GM12878 (cell line): ENCODE measurements at regions of chr6 and their contacts with region 1.

Region 1: DNA sequence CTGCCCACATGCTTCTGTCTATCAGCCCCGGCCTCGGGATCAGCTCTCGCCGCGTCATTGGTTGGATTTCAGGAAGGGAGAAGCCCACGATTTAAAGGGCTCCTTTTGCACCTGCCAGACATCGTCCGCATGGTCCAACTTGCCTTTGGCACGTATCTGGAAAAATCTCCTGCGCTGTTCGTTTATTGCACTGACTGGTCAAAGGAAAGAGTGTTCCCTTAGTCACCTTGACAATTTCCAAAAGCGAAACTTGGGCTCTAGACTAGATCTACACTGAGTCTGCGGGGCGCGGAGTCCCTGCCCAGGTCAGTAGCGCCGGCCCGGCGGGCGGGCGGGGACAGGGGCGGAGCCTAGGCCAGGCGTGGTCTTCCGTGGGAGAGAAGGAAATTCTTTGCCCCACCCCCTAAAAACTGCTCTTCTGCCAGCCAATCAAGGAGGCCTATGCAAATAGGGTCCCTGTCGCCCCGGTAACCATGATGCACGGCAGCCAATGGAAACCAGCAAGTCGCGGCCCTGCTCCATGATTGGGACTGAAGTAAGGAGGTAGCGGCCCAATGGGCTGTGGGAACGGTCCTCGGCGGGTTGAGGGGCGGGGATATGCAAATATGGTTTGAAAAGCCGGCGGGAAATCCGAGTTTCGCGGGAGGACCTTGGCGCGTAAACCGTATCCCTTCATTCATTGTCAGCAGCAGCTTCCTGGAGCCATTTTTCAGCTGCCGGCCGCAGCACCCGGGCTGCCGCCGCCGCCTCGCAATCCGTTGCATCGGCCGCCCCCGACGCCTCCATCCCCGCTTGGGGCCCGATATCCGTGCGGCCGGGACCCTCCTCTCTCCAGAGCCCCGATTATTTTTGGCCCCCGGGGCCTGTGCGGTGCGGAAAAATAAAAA is at the start of gene E2F3:
- DNase-seq: peak; percentile 98
- ATAC-seq: peak; percentile 83
- H3K4me3 ChIP-seq: peak within 1 kb of the TSS; percentile 82
- H3K27ac ChIP-seq: peak within 1 kb of the TSS; percentile 77
- H3K4me1 ChIP-seq: no peaks in the 10 kb centered on the region; the same call in 1 of the 2 replicates
- H3K27me3 ChIP-seq: no peaks in the 10 kb centered on the region
- CTCF ChIP-seq: no peak
- EP300 ChIP-seq: no peak
- POLR2A ChIP-seq: peak; percentile 87
- RAD21 ChIP-seq: no peak
- polyA plus RNA-seq, gene E2F3: 5.3 to 6.6 TPM

Region 2: DNA sequence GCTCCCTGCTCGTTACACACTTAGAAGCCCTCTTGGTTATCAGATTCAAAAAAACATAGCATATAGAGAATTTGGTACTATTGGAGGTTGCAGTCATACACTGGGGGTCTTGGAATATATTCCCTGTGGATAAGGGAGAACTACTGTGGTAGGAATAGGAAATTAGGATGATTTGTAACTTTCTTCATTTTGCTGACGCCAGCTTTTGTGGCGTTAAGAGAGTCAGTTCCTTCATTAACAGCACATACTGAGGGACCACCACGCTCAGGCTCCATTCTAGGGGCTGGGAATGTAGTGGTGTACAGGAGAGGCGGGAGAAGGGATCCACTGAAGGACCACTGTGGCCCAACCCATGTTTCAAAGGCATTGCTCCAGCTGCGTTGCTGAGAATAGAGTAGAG is 329.4 kb before region 1 on chr6:
- CTCF ChIA-PET with region 1: no interaction called
- POLR2A ChIA-PET with region 1: no interaction called
- RAD21 ChIA-PET with region 1: no interaction called
- SMC1A ChIA-PET with region 1: no interaction called
- in situ Hi-C with region 1: no loop called
- intact Hi-C with region 1: no loop called
- DNase-seq: no peak
- ATAC-seq: no peak
- H3K4me3 ChIP-seq: no peak overlapping the region
- H3K27ac ChIP-seq: no peak overlapping the region
- H3K4me1 ChIP-seq: no peaks in the 10 kb centered on the region
- H3K27me3 ChIP-seq: no peaks in the 10 kb centered on the region
- CTCF ChIP-seq: no peak
- EP300 ChIP-seq: no peak
- POLR2A ChIP-seq: no peak
- RAD21 ChIP-seq: no peak

Region 3: GRCh38 chr6:20117474-20117873 is 284.0 kb before region 1 on chr6:
- CTCF ChIA-PET with region 1: no interaction called
- POLR2A ChIA-PET with region 1: no interaction called
- RAD21 ChIA-PET with region 1: no interaction called
- SMC1A ChIA-PET with region 1: no interaction called
- in situ Hi-C with region 1: no loop called
- intact Hi-C with region 1: no loop called
- DNase-seq: no peak
- ATAC-seq: peak; percentile 74
- H3K4me3 ChIP-seq: no peak overlapping the region
- H3K27ac ChIP-seq: no peak overlapping the region
- H3K4me1 ChIP-seq: no peaks in the 10 kb centered on the region; the same call in 1 of the 2 replicates
- H3K27me3 ChIP-seq: no peaks in the 10 kb centered on the region
- CTCF ChIP-seq: no peak
- EP300 ChIP-seq: no peak
- POLR2A ChIP-seq: no peak
- RAD21 ChIP-seq: no peak

Region 4: DNA sequence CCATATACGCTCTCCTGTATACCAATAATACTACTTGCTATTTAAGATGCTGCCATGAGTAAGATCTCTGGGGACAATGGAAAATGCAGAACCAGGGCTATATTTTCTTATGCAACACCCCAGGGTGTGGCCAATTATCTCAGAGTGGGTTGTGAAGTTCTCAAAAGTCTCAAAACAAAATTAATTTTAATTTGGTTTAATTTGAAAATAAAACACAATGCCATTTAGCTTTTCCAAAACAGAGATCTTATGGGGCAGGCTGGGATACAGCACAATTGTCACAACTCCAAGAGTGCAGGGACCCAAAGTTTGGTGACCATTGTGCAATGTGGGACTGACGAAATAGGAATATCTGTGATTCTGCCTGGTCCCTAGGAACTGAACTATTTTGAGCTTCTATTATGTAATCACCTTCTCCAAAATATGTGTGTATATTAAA is 232.3 kb before region 1 on chr6:
- CTCF ChIA-PET with region 1: no interaction called
- POLR2A ChIA-PET with region 1: no interaction called
- RAD21 ChIA-PET with region 1: no interaction called
- SMC1A ChIA-PET with region 1: no interaction called
- in situ Hi-C with region 1: no loop called
- intact Hi-C with region 1: no loop called
- DNase-seq: no peak
- ATAC-seq: no peak
- H3K4me3 ChIP-seq: no peak overlapping the region
- H3K27ac ChIP-seq: no peak overlapping the region
- H3K4me1 ChIP-seq: peaks cover 8% of the 10 kb centered on the region
- H3K27me3 ChIP-seq: no peaks in the 10 kb centered on the region
- CTCF ChIP-seq: no peak
- EP300 ChIP-seq: no peak
- POLR2A ChIP-seq: no peak
- RAD21 ChIP-seq: no peak

Region 5: GRCh38 chr6:20291764-20292580 is 109.5 kb before region 1 on chr6:
- CTCF ChIA-PET with region 1: interaction called, 16 read pairs
- POLR2A ChIA-PET with region 1: interaction called, 3 read pairs
- RAD21 ChIA-PET with region 1: interaction called, 18 read pairs
- SMC1A ChIA-PET with region 1: interaction called, 8 read pairs
- in situ Hi-C with region 1: no loop called
- intact Hi-C with region 1: loop called (anchors 1 kb)
- DNase-seq: peak; percentile 52
- ATAC-seq: peak; percentile 92
- H3K4me3 ChIP-seq: no peak overlapping the region
- H3K27ac ChIP-seq: no peak overlapping the region
- H3K4me1 ChIP-seq: no peaks in the 10 kb centered on the region
- H3K27me3 ChIP-seq: no peaks in the 10 kb centered on the region
- CTCF ChIP-seq: peak; percentile 88 to 93 (median 90)
- EP300 ChIP-seq: no peak
- POLR2A ChIP-seq: no peak
- RAD21 ChIP-seq: peak; percentile 99

Region 6: DNA sequence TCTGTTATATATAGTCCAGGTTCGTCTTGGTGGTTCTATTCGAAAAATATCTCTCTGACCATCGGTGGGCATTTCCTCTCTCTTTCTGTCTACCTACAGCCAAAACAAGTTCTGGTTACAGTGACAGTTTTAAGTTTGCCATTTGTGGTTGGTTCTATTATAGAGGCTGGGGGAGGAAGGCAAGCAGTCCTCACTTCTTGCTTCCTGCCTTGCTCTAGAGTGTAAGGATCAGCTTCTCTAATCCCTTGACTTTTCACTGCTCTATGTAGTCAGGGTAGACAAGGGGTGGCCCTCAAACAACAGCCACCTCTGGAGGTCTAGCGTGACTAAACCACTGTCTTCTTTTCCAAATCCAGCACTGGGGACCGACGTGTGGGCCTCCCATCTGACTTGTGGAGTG is 16.4 kb after region 1 on chr6:
- CTCF ChIA-PET with region 1: interaction called, 15 read pairs
- POLR2A ChIA-PET with region 1: interaction called, 7 read pairs
- RAD21 ChIA-PET with region 1: interaction called, 9 read pairs
- SMC1A ChIA-PET with region 1: interaction called, 30 read pairs
- in situ Hi-C with region 1: no loop called
- intact Hi-C with region 1: no loop called
- DNase-seq: no peak
- ATAC-seq: peak; percentile 52
- H3K4me3 ChIP-seq: no peak overlapping the region
- H3K27ac ChIP-seq: peak overlapping the region; percentile 6; the same call in 1 of the 2 replicates
- H3K4me1 ChIP-seq: peaks cover 20% of the 10 kb centered on the region
- H3K27me3 ChIP-seq: no peaks in the 10 kb centered on the region
- CTCF ChIP-seq: no peak
- EP300 ChIP-seq: no peak
- POLR2A ChIP-seq: no peak
- RAD21 ChIP-seq: no peak

Region 7: DNA sequence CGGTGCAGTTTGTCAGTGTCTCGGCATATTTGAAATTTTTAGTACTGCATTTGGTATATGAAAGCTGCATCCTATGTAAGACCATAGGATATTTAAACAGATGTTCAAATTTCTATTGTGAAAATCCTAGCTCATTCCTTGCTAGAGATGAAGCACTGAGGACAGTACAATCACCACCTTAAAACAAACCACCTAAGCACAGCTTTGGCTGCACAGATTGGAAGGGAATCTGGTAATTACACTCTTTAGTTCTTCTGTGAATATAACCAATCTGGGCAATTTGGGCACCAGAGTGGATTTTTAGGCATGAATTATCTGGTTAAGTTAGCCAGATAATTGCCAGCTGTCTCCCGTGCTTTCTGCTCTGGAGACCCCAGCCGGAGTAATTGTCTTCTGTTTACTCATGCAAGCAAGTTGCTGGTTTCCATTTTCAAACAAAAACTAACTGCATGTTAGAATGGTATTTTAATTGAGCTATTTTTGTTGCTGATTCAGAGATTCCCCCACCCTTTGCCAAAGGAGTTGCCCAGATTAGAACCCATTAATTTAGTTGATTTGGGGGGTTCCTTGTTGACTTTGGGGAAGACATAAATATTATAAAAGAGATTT is 37.1 kb after region 1 on chr6:
- CTCF ChIA-PET with region 1: interaction called, 14 read pairs
- POLR2A ChIA-PET with region 1: no interaction called
- RAD21 ChIA-PET with region 1: interaction called, 7 read pairs
- SMC1A ChIA-PET with region 1: interaction called, 12 read pairs
- in situ Hi-C with region 1: no loop called
- intact Hi-C with region 1: no loop called
- DNase-seq: no peak
- ATAC-seq: no peak
- H3K4me3 ChIP-seq: no peak overlapping the region
- H3K27ac ChIP-seq: no peak overlapping the region
- H3K4me1 ChIP-seq: no peaks in the 10 kb centered on the region; the same call in 1 of the 2 replicates
- H3K27me3 ChIP-seq: no peaks in the 10 kb centered on the region
- CTCF ChIP-seq: no peak
- EP300 ChIP-seq: no peak
- POLR2A ChIP-seq: no peak
- RAD21 ChIP-seq: no peak

Region 8: DNA sequence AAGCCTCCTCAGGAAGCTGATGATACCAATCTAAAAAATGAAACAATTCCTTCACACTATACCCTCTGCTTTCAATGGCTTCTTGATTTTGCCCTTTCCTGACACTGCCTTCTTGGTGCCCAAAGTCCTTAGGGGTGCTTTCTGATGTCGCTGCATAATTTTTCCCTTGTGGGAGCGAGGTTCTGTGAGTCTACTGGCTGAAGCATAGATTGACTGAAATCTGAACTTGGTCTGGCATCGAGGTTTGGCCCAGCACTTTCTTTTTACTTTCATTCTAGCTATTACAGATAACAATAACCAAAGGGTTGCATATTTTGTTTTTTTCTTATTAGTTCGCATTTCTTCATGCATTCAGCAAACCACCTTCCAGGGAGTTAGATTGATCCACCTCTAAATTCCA is 66.0 kb after region 1 on chr6:
- CTCF ChIA-PET with region 1: interaction called, 12 read pairs
- POLR2A ChIA-PET with region 1: interaction called, 8 read pairs
- RAD21 ChIA-PET with region 1: interaction called, 12 read pairs
- SMC1A ChIA-PET with region 1: interaction called, 35 read pairs
- in situ Hi-C with region 1: no loop called
- intact Hi-C with region 1: loop called (anchors 2 kb)
- DNase-seq: peak; percentile 50
- ATAC-seq: peak; percentile 63
- H3K4me3 ChIP-seq: no peak overlapping the region
- H3K27ac ChIP-seq: peak overlapping the region; percentile 50
- H3K4me1 ChIP-seq: peaks cover 46% of the 10 kb centered on the region
- H3K27me3 ChIP-seq: no peaks in the 10 kb centered on the region
- CTCF ChIP-seq: no peak
- EP300 ChIP-seq: no peak
- POLR2A ChIP-seq: no peak
- RAD21 ChIP-seq: no peak

Region 9: GRCh38 chr6:20534295-20535262 is 133.1 kb after region 1 on chr6 and contains the start of gene CDKAL1:
- CTCF ChIA-PET with region 1: interaction called, 49 read pairs
- POLR2A ChIA-PET with region 1: interaction called, 8 read pairs
- RAD21 ChIA-PET with region 1: interaction called, 10 read pairs
- SMC1A ChIA-PET with region 1: interaction called, 21 read pairs
- in situ Hi-C with region 1: loop called (anchors 5 kb)
- intact Hi-C with region 1: no loop called
- DNase-seq: peak; percentile 91
- ATAC-seq: peak; percentile 89
- H3K4me3 ChIP-seq: peak within 1 kb of the TSS; percentile 93
- H3K27ac ChIP-seq: peak within 1 kb of the TSS; percentile 89
- H3K4me1 ChIP-seq: peaks cover 6% of the 10 kb centered on the region; the same call in 1 of the 2 replicates
- H3K27me3 ChIP-seq: no peaks in the 10 kb centered on the region
- CTCF ChIP-seq: no peak
- EP300 ChIP-seq: no peak
- POLR2A ChIP-seq: peak; percentile 87
- RAD21 ChIP-seq: no peak
- polyA plus RNA-seq, gene CDKAL1: 10.7 to 10.9 TPM